Left ventricle myocardium superior (tissue), 1 donor: ENCODE measurements at regions of chr3 and their contacts with region 1.

Region 1: DNA sequence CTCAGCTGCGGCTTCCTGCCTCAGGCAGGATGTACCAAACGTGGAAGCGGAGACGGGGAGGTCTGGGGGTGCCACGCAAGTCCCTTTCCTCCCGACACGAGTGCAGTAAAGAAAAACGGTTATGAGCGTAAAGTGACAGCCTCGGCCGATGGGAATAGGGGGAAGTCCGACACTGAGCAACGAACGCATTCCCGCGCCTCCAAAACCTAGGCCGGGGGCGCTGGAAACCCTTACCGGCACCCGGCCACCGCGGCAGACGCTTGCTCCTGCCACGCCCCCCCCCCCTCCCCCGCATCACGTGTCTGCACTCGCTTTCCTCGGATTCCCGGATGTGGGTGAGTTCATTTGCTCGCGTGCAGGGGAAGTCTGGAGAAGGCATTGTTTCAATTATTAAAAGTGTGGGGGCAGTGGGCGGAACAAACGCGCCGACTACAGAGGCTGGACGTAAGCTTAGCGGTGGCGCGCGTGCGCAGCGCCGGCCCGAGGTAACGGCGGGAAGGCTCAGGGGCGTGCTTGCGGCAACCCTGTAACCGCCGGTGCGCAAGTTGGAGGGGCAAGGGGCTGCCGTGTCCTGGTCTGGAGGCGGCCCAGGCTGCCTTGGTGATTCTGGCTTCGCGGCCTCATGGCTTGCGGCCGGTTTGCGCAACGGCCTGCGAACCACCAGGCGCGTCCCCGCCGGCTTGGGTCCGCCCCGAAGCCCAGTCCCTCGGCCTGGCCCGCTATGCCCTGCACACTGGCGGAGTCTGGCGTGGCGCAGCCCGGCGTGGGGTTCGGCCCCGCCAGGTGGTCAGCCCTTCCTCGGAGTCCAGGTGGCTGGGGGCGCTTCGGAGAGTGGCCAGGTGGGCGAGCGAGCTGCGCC is at the starts of genes ANAPC13 and CEP63:
- DNase-seq: peak; percentile 93
- ATAC-seq: peak; percentile 94
- total RNA-seq, gene ANAPC13: 75.6 TPM
- total RNA-seq, gene CEP63: 35.1 TPM

Region 2: GRCh38 chr3:134201201-134202130 is 284.5 kb before region 1 on chr3:
- intact Hi-C with region 1: loop called (anchors 10 kb)
- DNase-seq: no peak
- ATAC-seq: no peak